Activated CD4-positive, alpha-beta memory T cell treated with anti-CD3 and anti-CD28 coated beads for 36 hours (primary cell): ENCODE measurements at regions of chr6 and their contacts with region 1.

Region 1: DNA sequence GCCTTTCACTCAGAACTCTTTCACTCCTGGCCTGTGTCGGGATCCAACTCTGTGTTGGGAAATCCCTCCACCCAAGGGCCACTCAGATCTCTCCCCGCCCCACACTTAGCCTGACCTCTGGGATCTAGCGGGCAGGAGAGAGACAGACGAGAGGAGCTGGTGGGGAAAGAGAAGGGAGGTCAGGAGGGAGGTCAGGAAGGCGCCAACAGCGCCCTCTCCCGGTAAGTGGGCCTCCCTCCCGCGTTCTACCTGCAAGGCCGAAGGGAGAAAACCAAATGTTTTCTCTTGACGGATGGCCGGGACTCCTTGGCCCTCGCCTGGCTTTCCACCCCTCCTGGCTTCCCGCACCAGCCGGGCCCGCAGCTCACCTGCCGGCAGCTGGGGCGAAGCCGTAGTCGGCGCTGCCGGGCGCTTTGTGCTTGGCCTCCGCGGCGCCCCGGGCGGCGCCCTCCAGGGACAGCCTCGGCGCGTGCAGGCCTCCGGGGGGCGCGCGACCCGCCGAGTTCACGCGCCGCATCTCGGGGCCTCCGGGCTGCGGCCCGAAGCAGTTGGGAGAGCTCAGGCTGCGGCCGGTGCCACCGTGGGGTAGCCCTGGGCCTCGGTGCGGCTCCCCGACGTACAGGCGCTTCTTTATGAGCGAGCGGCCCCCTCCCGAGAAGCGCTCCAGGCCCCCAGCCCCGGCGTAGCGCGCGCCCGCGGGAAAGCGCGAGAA is 38.2 kb downstream of the C6orf132 start:
- DNase-seq: peak; percentile 87
- H3K4me3 Mint-ChIP-seq: peak overlapping the region; percentile 65
- H3K27ac Mint-ChIP-seq: peak overlapping the region; percentile 56
- H3K4me1 Mint-ChIP-seq: peaks cover 36% of the 10 kb centered on the region
- H3K27me3 Mint-ChIP-seq: peaks cover 6% of the 10 kb centered on the region

Region 2: GRCh38 chr6:42050266-42051032 is 53.8 kb before region 1 on chr6 and contains the start of gene TAF8:
- CTCF ChIA-PET with region 1: interaction called, 27 read pairs
- POLR2A ChIA-PET with region 1: interaction called, 3 read pairs
- intact Hi-C with region 1: loop called (anchors 2 kb)
- DNase-seq: peak; percentile 95
- H3K4me3 Mint-ChIP-seq: peak within 1 kb of the TSS; percentile 97
- H3K27ac Mint-ChIP-seq: peak within 1 kb of the TSS; percentile 99
- H3K4me1 Mint-ChIP-seq: peaks cover 67% of the 10 kb centered on the region
- H3K27me3 Mint-ChIP-seq: no peaks in the 10 kb centered on the region
- total RNA-seq, gene TAF8: 57.7 to 58.7 TPM

Region 3: GRCh38 chr6:42086046-42087035 is 17.9 kb before region 1 on chr6:
- CTCF ChIA-PET with region 1: interaction called, 91 read pairs
- POLR2A ChIA-PET with region 1: no interaction called
- intact Hi-C with region 1: no loop called
- DNase-seq: no peak
- H3K4me3 Mint-ChIP-seq: no peak overlapping the region
- H3K27ac Mint-ChIP-seq: no peak overlapping the region
- H3K4me1 Mint-ChIP-seq: no peaks in the 10 kb centered on the region
- H3K27me3 Mint-ChIP-seq: no peaks in the 10 kb centered on the region

Region 4: GRCh38 chr6:42154461-42155198 is 50.4 kb after region 1 on chr6:
- CTCF ChIA-PET with region 1: interaction called, 11 read pairs
- POLR2A ChIA-PET with region 1: no interaction called
- intact Hi-C with region 1: no loop called
- DNase-seq: no peak
- H3K4me3 Mint-ChIP-seq: no peak overlapping the region
- H3K27ac Mint-ChIP-seq: no peak overlapping the region
- H3K4me1 Mint-ChIP-seq: no peaks in the 10 kb centered on the region
- H3K27me3 Mint-ChIP-seq: no peaks in the 10 kb centered on the region

Region 5: GRCh38 chr6:42315991-42316378 is 211.7 kb after region 1 on chr6:
- CTCF ChIA-PET with region 1: no interaction called
- POLR2A ChIA-PET with region 1: no interaction called
- intact Hi-C with region 1: no loop called
- DNase-seq: peak; percentile 71
- H3K4me3 Mint-ChIP-seq: no peak overlapping the region
- H3K27ac Mint-ChIP-seq: peak overlapping the region; percentile 80
- H3K4me1 Mint-ChIP-seq: peaks cover 65% of the 10 kb centered on the region
- H3K27me3 Mint-ChIP-seq: no peaks in the 10 kb centered on the region

Region 6: DNA sequence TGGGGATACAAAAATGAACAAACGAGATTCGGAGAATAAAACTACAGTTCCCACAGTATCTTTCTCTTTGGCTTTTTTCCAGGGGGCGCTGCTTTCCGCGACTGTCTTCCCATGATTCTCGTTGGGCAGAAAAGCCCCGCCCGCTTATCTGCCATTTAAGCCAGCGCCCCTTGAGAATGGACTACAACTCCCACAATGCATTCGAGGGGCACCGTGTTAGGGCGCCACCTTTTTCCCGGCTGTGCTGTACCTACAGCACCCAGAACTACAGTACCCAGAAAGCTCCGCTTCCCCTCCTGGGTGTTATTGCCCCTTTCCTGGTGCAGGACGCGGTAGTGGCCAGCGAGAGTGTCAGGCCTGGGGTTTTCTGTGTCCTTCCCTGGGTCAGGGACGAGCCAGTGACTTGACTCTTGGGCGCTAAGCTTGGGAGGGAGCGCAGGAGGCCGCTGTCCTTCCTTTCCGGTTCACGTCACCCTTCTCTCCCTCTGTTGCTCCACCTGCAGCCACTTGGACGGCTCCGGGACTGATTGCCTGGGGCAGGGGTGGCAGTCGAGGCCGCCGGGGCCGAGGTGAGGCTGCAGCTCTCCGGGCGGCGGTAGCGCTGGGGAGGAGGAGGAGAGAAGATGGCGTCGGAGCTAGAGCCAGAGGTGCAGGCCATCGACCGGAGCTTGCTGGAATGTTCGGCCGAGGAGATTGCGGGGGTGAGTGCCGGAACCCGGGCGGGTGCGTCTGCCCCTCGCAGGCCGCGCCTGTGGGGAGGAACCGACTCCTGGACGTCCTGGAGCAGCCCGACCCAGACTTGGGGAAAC is 459.6 kb after region 1 on chr6 and contains the start of gene UBR2:
- CTCF ChIA-PET with region 1: interaction called, 3 read pairs
- POLR2A ChIA-PET with region 1: interaction called, 4 read pairs
- intact Hi-C with region 1: loop called (anchors 5 kb)
- DNase-seq: peak; percentile 96
- H3K4me3 Mint-ChIP-seq: peak within 1 kb of the TSS; percentile 83
- H3K27ac Mint-ChIP-seq: peak within 1 kb of the TSS; percentile 91
- H3K4me1 Mint-ChIP-seq: peaks cover 25% of the 10 kb centered on the region
- H3K27me3 Mint-ChIP-seq: no peaks in the 10 kb centered on the region
- total RNA-seq, gene UBR2: 31.4 to 32.5 TPM